GM10248 (cell line): ENCODE measurements at regions of chr16 and their contacts with region 1.

Region 1: DNA sequence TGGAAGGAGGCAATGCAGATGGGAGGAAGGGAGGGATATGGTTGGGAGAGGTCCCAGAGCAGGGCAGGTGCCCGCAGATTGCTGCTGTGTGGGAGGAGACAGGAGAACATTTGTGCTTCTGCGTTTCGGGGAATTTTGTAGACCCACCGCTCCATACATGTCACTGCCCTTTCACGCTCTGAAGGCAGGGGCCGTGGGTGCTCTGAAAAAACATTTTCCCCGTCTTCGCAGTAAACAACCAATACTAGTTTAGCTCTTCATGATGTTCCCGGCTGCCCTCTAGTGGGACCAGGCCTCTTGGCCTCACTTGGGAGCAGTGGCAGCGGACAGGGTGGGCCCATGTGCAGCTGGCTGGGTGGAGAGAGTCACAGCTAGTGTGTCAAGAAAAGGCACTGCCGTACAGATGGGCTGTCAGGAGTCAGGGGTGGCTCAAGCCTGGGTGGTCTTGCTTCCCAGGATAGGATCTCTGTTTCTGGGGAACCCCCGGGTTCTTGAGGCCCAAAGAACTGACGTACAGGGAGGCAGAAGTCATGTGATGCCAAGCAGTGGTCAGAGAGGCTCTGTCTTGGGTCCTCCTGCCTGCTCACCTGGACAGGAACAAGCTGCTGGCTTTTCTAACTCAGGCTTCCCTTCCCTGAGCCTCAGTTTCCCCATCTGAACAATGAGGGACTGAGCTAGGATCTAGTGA is 46.5 kb upstream of the CPNE2 start:
- DNase-seq: peak; percentile 81
- CTCF ChIP-seq: peak; percentile 86

Region 2: GRCh38 chr16:56776562-56776961 is 269.3 kb before region 1 on chr16:
- CTCF ChIA-PET with region 1: no interaction called
- POLR2A ChIA-PET with region 1: no interaction called
- DNase-seq: no peak
- CTCF ChIP-seq: no peak

Region 3: DNA sequence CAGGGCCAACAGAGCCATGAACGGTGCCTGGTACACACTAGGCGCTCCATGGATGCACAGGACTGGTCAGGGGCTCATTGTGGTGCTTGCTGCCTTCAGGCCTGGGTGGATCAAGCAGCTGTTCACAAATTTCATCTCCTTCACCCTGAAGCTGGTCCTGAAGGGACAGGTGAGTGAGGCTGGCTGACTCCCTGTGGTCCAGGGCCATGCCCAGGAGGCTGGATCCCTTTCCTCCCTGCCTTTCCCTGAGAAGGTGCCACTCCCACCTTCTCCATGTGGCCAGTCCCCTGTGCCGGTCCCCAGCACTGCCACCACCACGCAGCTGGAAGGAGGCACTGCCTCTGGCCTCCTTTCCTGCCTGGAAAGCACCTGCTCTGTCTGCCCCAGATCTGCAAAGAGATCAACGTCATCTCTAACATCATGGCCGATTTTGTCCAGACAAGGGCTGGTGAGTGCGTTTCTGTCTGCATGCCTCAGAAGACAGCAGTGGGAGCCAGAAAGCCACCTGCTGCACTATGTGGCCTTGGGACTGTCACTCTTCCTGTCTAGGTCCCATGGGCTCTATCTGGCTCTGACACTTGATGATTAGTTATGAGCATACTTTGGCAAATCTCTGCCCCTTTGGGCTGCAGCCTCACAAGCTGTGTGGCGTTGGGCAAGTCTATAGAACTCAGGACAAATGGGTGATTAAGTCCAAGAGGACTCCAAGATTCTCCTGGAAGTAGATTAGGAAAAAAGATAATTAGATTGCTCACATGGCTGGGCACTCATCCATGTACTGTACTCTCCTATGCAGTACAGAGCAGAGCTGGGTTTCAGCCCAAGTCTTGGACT is 74.7 kb before region 1 on chr16:
- CTCF ChIA-PET with region 1: interaction called, 58 read pairs
- POLR2A ChIA-PET with region 1: no interaction called
- DNase-seq: peak; percentile 64
- CTCF ChIP-seq: no peak

Region 4: GRCh38 chr16:57023541-57024249 is 22.1 kb before region 1 on chr16:
- CTCF ChIA-PET with region 1: interaction called, 13 read pairs
- POLR2A ChIA-PET with region 1: interaction called, 5 read pairs
- DNase-seq: no peak
- CTCF ChIP-seq: no peak